IMR-90 (cell line): ENCODE measurements at regions of chr1 and their contacts with region 1.

Region 1: GRCh38 chr1:200415693-200416593 is 6.1 kb upstream of the ZNF281 start:
- DNase-seq: peak; percentile 98
- ATAC-seq: peak; percentile 80
- H3K4me3 ChIP-seq: no peak overlapping the region
- H3K27ac ChIP-seq: peak overlapping the region; percentile 46
- H3K4me1 ChIP-seq: peaks cover 7% of the 10 kb centered on the region; the same call in 1 of the 2 replicates
- H3K27me3 ChIP-seq: no peaks in the 10 kb centered on the region
- CTCF ChIP-seq: no peak
- POLR2A ChIP-seq: no peak
- RAD21 ChIP-seq: no peak

Region 2: GRCh38 chr1:199832451-199832850 is 583.5 kb before region 1 on chr1:
- CTCF ChIA-PET with region 1: no interaction called
- POLR2A ChIA-PET with region 1: no interaction called
- dilution Hi-C with region 1: no loop called
- in situ Hi-C with region 1: no loop called
- intact Hi-C with region 1: no loop called
- DNase-seq: no peak
- ATAC-seq: no peak
- H3K4me3 ChIP-seq: no peak overlapping the region
- H3K27ac ChIP-seq: no peak overlapping the region
- H3K4me1 ChIP-seq: no peaks in the 10 kb centered on the region
- H3K27me3 ChIP-seq: no peaks in the 10 kb centered on the region
- CTCF ChIP-seq: no peak
- POLR2A ChIP-seq: no peak
- RAD21 ChIP-seq: no peak

Region 3: GRCh38 chr1:200336111-200336845 is 79.7 kb before region 1 on chr1:
- CTCF ChIA-PET with region 1: no interaction called
- POLR2A ChIA-PET with region 1: no interaction called
- dilution Hi-C with region 1: no loop called
- in situ Hi-C with region 1: no loop called
- intact Hi-C with region 1: loop called (anchors 1 kb)
- DNase-seq: peak; percentile 70
- ATAC-seq: peak; percentile 74
- H3K4me3 ChIP-seq: no peak overlapping the region
- H3K27ac ChIP-seq: no peak overlapping the region
- H3K4me1 ChIP-seq: peaks cover 20% of the 10 kb centered on the region
- H3K27me3 ChIP-seq: no peaks in the 10 kb centered on the region
- CTCF ChIP-seq: no peak
- POLR2A ChIP-seq: no peak
- RAD21 ChIP-seq: no peak

Region 4: GRCh38 chr1:200453553-200453905 is 37.6 kb after region 1 on chr1:
- CTCF ChIA-PET with region 1: interaction called, 7 read pairs
- POLR2A ChIA-PET with region 1: interaction called, 16 read pairs
- dilution Hi-C with region 1: no loop called
- in situ Hi-C with region 1: no loop called
- intact Hi-C with region 1: no loop called
- DNase-seq: no peak
- ATAC-seq: peak; percentile 46
- H3K4me3 ChIP-seq: no peak overlapping the region
- H3K27ac ChIP-seq: no peak overlapping the region
- H3K4me1 ChIP-seq: no peaks in the 10 kb centered on the region
- H3K27me3 ChIP-seq: no peaks in the 10 kb centered on the region
- CTCF ChIP-seq: no peak
- POLR2A ChIP-seq: no peak
- RAD21 ChIP-seq: no peak